ENCODE measurements at regions of chr19 and their contacts with region 1.

Region 1: GRCh38 chr19:7903244-7904073 is at the start of gene MAP2K7:
- DNase-seq: peak; percentile 100
- H3K4me3 Mint-ChIP-seq: peak within 1 kb of the TSS; percentile 97
- H3K27ac Mint-ChIP-seq: peak within 1 kb of the TSS; percentile 98
- H3K4me1 Mint-ChIP-seq: peaks cover 32% of the 10 kb centered on the region
- H3K27me3 Mint-ChIP-seq: no peaks in the 10 kb centered on the region
- CTCF ChIP-seq: peak; percentile 42
- total RNA-seq, gene MAP2K7: 30.5 and 36.3 TPM in 2 replicates

Region 2: DNA sequence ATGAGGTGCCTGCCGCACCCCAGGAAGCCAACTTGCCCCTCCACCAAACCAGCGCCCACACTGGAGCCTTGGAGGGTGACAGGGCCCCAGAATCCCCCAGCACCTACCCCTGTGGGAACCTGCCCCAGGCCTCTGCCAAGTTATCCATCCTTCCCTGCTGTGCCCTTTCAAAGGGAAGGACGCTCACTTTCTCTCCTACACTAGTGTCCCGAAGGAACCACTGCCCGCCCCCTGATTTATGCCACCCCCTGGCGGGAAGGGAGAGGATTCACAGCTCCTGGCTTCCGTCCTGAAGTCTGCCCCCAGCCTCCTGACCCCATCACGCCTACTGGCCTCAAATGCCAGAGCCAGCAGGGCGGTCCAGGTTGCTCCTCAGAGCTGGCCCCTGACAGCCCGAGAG is 72.0 kb before region 1 on chr19:
- CTCF ChIA-PET with region 1: interaction called, 5 read pairs
- POLR2A ChIA-PET with region 1: interaction called, 14 read pairs
- intact Hi-C with region 1: no loop called
- DNase-seq: peak; percentile 68
- H3K4me3 Mint-ChIP-seq: peak overlapping the region; percentile 78
- H3K27ac Mint-ChIP-seq: peak overlapping the region; percentile 97
- H3K4me1 Mint-ChIP-seq: peaks cover 32% of the 10 kb centered on the region
- H3K27me3 Mint-ChIP-seq: no peaks in the 10 kb centered on the region
- CTCF ChIP-seq: peak; percentile 33

Region 3: DNA sequence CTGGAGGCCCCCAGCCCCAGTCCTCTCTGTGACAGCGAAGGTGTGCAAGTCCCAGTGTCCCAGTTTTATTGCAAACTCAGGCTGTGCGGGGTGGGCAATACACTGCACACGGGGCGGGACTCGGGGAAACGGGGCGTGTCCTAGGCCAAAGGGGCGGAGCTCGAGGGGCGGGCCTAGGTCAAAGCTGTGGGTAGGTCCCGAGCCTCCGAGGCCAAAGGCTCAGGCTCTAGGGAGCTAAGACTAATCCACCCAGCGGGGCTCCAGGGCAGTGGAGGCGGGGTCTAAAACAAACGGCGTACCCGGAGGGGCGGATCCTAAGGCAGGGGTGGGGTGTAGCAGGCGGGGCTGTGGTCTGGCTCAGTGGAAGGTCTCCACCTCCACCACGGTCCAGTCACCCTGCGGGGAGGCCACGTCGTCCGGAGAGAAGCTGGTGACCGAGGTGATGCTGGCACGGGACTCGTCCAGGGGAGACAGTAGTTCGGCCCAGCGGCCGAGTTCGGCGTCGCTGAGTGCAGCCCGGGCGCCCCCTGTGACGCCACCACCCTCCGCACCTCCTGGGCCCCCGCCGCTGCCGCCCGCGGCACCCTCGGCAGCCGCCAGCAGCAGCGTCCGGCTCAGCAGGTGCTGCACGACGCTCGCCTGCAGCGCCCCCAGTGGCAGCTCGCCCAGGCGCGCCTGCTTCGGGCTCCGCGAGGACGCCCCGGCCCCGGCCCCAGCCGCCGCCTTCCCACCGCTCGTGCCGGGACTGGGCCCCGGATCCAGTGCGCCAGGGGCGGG is 34.6 kb before region 1 on chr19:
- CTCF ChIA-PET with region 1: interaction called, 18 read pairs
- POLR2A ChIA-PET with region 1: interaction called, 91 read pairs
- intact Hi-C with region 1: loop called (anchors 1 kb)
- DNase-seq: peak; percentile 91
- H3K4me3 Mint-ChIP-seq: peak overlapping the region; percentile 77
- H3K27ac Mint-ChIP-seq: peak overlapping the region; percentile 42
- H3K4me1 Mint-ChIP-seq: peaks cover 27% of the 10 kb centered on the region
- H3K27me3 Mint-ChIP-seq: no peaks in the 10 kb centered on the region
- CTCF ChIP-seq: peak; percentile 68

Region 4: DNA sequence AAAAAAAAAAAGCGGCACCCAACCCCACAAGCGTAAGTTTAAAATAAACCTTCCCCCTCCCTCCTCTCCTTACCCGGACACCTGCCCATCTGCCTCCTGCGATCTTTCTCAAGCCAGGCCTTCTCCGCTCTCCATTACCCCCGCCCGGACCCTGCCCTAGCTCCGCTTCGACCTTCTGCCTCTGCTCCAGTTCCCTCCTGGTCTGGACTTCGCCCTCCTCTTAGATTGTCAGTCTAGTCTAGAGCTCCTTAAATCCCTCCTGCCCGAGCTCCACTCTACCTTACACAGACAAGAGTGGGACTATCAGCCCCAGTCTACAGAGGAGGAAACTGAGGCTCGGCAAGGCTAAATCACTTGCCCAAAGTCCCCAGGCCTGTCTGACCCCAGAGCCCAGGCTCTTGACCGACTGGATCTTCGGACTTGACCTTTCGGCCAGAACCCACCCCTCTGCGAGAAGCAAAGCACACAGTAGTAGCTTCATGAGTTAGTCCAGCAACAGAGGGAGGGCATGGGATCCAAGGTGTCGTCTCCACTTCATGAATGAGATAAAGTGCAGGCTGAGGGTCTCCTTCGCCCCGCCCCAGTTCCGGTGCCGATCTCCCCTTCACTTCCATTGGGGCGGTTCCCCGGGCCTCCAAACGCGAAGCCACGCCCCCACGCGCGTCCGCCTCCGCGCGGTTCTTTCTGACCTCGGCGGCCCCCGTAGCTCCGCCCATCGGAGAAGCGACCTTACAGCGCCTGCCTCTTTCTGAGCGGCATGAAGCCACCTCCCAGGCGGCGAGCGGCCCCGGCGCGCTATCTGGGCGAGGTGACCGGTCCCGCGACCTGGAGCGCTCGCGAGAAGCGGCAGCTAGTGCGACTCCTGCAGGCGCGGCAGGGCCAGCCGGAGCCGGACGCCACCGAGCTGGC is 16.4 kb after region 1 on chr19 and contains the start of gene SNAPC2:
- CTCF ChIA-PET with region 1: interaction called, 6 read pairs
- POLR2A ChIA-PET with region 1: interaction called, 61 read pairs
- intact Hi-C with region 1: no loop called
- DNase-seq: peak; percentile 94
- H3K4me3 Mint-ChIP-seq: peak within 1 kb of the TSS; percentile 88
- H3K27ac Mint-ChIP-seq: peak within 1 kb of the TSS; percentile 59
- H3K4me1 Mint-ChIP-seq: peaks cover 19% of the 10 kb centered on the region
- H3K27me3 Mint-ChIP-seq: no peaks in the 10 kb centered on the region
- CTCF ChIP-seq: no peak
- total RNA-seq, gene SNAPC2: 24.1 and 27.1 TPM in 2 replicates

Region 5: DNA sequence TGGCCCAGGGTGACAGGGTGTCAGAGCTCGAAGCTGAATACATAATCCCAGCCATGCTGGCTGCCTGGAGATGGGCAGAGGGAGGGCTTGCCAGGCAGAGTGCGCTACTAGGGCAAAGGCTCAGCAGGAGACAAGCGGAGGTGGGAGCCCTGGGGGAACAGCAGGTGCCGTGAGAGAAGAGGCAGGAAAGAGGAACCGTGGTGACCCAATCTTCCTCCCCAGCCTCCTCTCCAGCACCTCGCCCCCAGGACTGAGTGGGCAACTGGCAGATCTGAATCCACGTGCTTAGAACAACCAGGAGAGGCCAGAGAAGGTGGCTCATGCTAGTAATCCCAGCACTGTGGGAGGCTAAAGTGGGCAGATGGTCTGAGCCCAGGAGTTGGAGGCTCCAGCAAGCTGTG is 138.1 kb after region 1 on chr19:
- CTCF ChIA-PET with region 1: no interaction called
- POLR2A ChIA-PET with region 1: no interaction called
- intact Hi-C with region 1: no loop called
- DNase-seq: no peak
- H3K4me3 Mint-ChIP-seq: no peak overlapping the region
- H3K27ac Mint-ChIP-seq: no peak overlapping the region
- H3K4me1 Mint-ChIP-seq: no peaks in the 10 kb centered on the region
- H3K27me3 Mint-ChIP-seq: peaks cover 13% of the 10 kb centered on the region
- CTCF ChIP-seq: no peak